B cell (primary cell): ENCODE measurements at regions of chr5 and their contacts with region 1.

Region 1: DNA sequence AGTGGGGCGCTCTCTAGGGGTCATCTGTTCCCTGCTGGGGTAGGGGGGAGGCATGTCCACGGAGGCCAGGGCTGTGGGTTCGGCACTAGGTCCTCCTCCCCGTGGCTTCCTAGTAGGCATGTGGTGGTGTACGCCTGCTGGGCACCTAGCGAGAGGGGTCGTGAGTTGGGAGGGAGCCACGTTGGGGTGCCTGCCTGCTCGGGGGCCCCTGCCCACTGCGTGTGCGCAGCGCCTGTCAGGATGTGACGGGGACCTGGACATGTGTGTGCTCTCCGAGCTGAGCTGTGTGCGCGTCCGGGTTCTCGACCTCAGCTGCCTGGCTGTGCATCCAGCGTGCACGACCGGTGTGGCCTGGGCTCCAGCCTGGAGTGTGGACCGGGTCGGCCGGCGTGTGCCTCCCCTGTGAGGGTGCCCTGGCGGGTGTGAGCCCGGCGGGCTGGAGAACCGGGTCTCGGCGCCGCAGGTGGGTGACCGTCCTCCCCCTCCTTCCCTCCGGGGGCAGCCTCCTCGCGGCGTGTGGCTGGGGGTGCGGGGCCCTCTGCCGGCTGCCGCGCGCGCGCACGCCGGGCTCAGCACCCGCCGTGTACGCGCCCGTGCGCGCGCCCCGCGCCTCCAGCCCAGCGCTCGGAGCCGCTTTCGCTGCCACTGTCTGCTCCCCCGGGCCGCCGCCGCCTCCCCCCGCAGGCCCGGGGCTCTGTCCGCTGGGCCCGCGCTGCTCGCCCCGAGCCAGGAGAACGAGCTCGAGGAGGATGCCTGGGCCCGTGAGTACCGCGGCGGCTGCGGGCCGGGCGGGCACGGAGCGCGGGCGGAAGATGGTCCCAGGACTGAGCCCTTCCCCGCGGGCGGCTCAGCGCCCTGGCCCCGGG is at the start of gene PRR7:
- DNase-seq: peak; percentile 91
- ATAC-seq: peak; percentile 64
- H3K4me3 ChIP-seq: peak within 1 kb of the TSS in 4 of 5 experiments; percentile 45 to 66 (median 54)
- H3K4me3 Mint-ChIP-seq: peak within 1 kb of the TSS; percentile 82
- H3K27ac ChIP-seq: peak within 1 kb of the TSS; percentile 68 to 77
- H3K27ac Mint-ChIP-seq: peak within 1 kb of the TSS; percentile 92
- H3K4me1 ChIP-seq: peaks cover 34 to 50% of the 10 kb centered on the region in 2 donors
- H3K4me1 Mint-ChIP-seq: peaks cover 48% of the 10 kb centered on the region
- H3K27me3 ChIP-seq: peaks cover 0 to 14% (median 0%) of the 10 kb centered on the region in 4 experiments
- H3K27me3 Mint-ChIP-seq: no peaks in the 10 kb centered on the region
- CTCF ChIP-seq: no peak
- total RNA-seq, gene PRR7: 4.8 and 5.6 TPM in 2 replicates

Region 2: DNA sequence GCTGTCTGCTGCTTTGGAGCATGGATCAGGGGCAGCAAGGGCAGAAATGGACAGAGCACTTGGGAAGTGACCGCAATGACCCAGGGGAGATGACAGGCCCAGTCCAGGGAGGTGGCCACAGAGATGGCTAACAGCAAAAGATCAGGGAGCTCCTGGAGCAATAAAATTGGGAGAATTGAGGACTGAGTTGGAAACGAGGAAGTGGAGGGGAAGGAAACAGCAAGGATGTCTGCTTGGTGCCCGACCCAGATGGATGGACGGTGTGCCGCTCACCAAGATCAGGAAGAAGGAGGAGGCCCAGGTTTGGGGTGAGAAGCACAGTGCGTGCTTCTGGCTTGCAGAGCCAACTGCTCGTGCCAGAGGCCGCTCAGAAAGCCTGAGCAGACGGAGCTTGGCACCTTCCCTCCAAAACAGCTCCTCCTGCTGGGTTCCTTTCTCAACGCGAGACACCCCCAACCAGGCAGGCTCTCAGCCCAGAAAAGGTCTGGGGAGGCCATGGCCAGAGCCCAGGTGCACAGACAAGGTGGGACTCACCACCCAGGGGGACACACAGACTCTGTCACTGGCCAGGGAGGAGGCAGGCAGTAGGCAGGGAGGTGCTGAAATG is 63.9 kb before region 1 on chr5:
- CTCF ChIA-PET with region 1: no interaction called
- POLR2A ChIA-PET with region 1: no interaction called
- intact Hi-C with region 1: no loop called
- DNase-seq: no peak
- ATAC-seq: no peak
- H3K4me3 ChIP-seq: no peak overlapping the region
- H3K4me3 Mint-ChIP-seq: no peak overlapping the region
- H3K27ac ChIP-seq: no peak overlapping the region
- H3K27ac Mint-ChIP-seq: no peak overlapping the region
- H3K4me1 ChIP-seq: no peaks in the 10 kb centered on the region
- H3K4me1 Mint-ChIP-seq: peaks cover 2% of the 10 kb centered on the region
- H3K27me3 ChIP-seq: peaks cover 0 to 16% (median 0%) of the 10 kb centered on the region in 4 experiments
- H3K27me3 Mint-ChIP-seq: peaks cover 21% of the 10 kb centered on the region
- CTCF ChIP-seq: no peak

Region 3: DNA sequence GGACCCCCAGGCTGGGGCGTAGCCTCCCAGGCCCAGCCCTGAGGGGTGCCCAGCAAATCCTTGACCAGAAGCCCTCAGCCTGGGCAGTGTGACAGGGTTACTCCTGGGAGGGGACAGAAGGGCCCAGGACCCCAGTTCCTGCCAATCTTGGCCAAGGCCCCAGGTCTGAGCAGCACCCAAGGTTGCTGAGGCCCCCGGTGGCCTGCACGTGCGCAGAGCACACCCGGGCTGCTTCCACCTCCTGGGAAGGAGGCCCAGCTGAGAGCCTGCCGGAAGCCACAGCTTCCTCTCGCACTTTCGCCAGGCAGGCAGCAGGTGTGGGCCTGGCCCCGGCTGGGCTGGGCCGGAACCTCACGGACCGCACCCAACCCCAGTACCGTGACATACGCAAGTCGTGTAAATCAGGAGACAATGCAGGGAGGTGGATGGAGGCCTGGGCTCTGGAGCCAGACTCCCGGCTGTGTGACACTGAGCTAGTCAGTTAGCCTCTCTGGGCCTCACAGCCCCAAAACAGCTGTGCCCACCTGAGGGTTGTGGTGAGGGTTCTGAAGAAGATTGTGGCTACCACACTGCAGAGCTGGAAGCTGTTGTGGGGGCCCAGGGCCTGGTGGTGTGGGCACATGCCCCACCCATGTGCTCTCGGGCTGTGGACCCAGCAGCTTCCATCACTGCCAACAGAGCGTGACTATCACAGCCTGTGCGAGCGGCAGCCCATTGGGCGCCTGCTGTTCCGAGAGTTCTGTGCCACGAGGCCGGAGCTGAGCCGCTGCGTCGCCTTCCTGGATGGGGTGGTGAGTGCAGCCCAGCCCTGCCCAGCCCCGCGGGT is 14.9 kb before region 1 on chr5:
- CTCF ChIA-PET with region 1: interaction called, 152 read pairs
- POLR2A ChIA-PET with region 1: interaction called, 103 read pairs
- intact Hi-C with region 1: loop called (anchors 1 kb)
- DNase-seq: peak; percentile 95
- ATAC-seq: peak; percentile 61
- H3K4me3 ChIP-seq: peak overlapping the region in 4 of 5 experiments; percentile 29 to 35 (median 32)
- H3K4me3 Mint-ChIP-seq: peak overlapping the region; percentile 94
- H3K27ac ChIP-seq: peak overlapping the region; percentile 92 to 96
- H3K27ac Mint-ChIP-seq: peak overlapping the region; percentile 97
- H3K4me1 ChIP-seq: peaks cover 63 to 83% of the 10 kb centered on the region in 2 donors
- H3K4me1 Mint-ChIP-seq: peaks cover 65% of the 10 kb centered on the region
- H3K27me3 ChIP-seq: no peaks in the 10 kb centered on the region
- H3K27me3 Mint-ChIP-seq: no peaks in the 10 kb centered on the region
- CTCF ChIP-seq: no peak

Region 4: GRCh38 chr5:177478711-177479646 is 32.5 kb after region 1 on chr5:
- CTCF ChIA-PET with region 1: no interaction called
- POLR2A ChIA-PET with region 1: no interaction called
- intact Hi-C with region 1: no loop called
- DNase-seq: peak; percentile 56
- ATAC-seq: peak; percentile 62
- H3K4me3 ChIP-seq: no peak overlapping the region
- H3K4me3 Mint-ChIP-seq: peak overlapping the region; percentile 34
- H3K27ac ChIP-seq: peak overlapping the region in 1 of 2 donors; percentile 3
- H3K27ac Mint-ChIP-seq: peak overlapping the region; percentile 81
- H3K4me1 ChIP-seq: peaks cover 14 to 25% of the 10 kb centered on the region in 2 donors
- H3K4me1 Mint-ChIP-seq: peaks cover 30% of the 10 kb centered on the region
- H3K27me3 ChIP-seq: peaks cover 0 to 5% (median 1%) of the 10 kb centered on the region in 4 experiments
- H3K27me3 Mint-ChIP-seq: peaks cover 4% of the 10 kb centered on the region
- CTCF ChIP-seq: no peak

Region 5: DNA sequence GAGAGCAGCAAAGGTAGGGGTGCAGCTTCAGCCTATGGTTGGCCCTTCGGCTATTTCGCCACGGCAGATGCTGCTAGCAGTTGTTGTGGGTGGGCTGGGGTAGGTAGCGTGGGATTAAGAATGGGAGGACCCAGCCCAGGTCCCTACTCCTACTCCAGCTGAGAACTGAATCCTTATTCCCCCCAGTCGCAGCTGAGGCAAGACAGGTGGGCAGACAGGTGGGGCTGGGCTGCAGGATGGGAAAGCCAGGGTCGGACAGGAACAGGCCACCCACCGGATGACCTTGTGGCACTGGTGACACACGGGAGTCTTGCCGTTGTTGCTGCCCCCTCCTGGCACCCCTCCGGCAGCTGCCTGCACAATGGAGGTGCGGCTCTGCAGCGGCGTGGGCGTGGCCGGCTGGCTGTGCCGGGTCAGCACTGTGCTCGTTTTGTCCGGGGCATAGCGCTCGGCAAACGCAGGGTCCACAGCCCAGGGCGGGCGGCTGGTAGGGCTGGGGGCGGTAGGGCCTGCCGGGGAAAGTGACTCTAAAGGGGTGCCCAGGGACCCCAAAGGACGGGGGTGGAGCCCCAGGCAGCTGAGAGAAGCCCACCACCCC is 42.8 kb after region 1 on chr5:
- CTCF ChIA-PET with region 1: no interaction called
- POLR2A ChIA-PET with region 1: interaction called, 12 read pairs
- intact Hi-C with region 1: no loop called
- DNase-seq: no peak
- ATAC-seq: no peak
- H3K4me3 ChIP-seq: no peak overlapping the region
- H3K4me3 Mint-ChIP-seq: no peak overlapping the region
- H3K27ac ChIP-seq: no peak overlapping the region
- H3K27ac Mint-ChIP-seq: no peak overlapping the region
- H3K4me1 ChIP-seq: peaks cover 6 to 9% of the 10 kb centered on the region in 2 donors
- H3K4me1 Mint-ChIP-seq: peaks cover 14% of the 10 kb centered on the region
- H3K27me3 ChIP-seq: no peaks in the 10 kb centered on the region
- H3K27me3 Mint-ChIP-seq: no peaks in the 10 kb centered on the region
- CTCF ChIP-seq: no peak

Region 6: GRCh38 chr5:178196986-178197385 is 750.6 kb after region 1 on chr5:
- CTCF ChIA-PET with region 1: no interaction called
- POLR2A ChIA-PET with region 1: no interaction called
- intact Hi-C with region 1: no loop called
- DNase-seq: no peak
- ATAC-seq: no peak
- H3K4me3 ChIP-seq: no peak overlapping the region
- H3K4me3 Mint-ChIP-seq: no peak overlapping the region
- H3K27ac ChIP-seq: no peak overlapping the region
- H3K27ac Mint-ChIP-seq: no peak overlapping the region
- H3K4me1 ChIP-seq: no peaks in the 10 kb centered on the region
- H3K4me1 Mint-ChIP-seq: no peaks in the 10 kb centered on the region
- H3K27me3 ChIP-seq: peaks cover 0 to 18% (median 5%) of the 10 kb centered on the region in 4 experiments
- H3K27me3 Mint-ChIP-seq: peaks cover 18% of the 10 kb centered on the region
- CTCF ChIP-seq: no peak